ENCODE measurements at regions of chr4 and their contacts with region 1.

Region 1: DNA sequence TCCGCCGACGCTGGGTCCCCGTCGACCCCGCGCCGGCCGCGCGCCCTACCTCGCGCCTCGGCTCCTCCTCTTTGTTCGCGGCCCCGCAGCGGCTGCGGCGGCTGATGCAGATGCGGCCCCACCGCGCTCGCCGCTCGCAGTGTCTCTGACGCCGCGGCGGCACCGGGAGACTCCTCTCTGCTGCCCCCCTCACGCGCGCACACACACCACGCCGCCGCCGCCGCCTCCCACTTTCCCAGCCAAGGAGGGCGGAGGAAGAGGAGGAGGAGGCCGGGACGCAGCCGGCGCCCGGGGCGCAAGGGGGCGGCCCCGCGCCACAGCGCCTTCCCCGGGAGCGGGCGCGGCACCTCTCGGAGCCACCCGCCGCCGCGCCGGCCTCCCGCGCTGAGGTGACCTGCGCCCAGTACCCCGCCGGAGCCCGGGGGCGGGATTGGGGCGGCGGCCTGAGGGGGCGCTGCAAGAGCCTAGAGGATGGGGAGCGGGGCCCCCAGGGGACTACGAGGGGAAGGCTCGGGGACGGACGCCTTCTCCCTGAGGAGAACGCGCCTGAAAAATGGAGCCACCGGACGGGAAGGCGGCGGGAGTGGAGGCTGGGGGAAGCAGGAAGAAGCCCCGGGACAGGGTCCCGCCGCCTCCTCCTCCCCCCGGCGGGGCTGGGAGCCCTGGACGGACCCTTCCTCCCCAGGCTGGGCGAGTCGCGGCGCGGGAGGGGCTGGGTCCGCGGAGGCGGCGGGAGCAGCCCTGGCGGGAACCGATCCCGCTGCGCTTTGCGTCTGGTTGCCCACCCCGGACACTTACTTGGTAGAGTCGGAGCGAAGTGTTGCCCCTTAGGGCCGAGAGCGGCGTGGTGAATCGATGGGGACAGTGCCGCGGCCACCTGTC is at the start of gene SH3RF1:
- DNase-seq: peak; percentile 63 to 95
- H3K4me3 ChIP-seq: peak within 1 kb of the TSS; percentile 65 to 84
- H3K27ac ChIP-seq: peak within 1 kb of the TSS; percentile 95 to 98
- H3K4me1 ChIP-seq: peaks cover 0 to 30% of the 10 kb centered on the region in 2 donors
- H3K27me3 ChIP-seq: no peaks in the 10 kb centered on the region
- CTCF ChIP-seq: peak; percentile 20 to 35 (median 26)
- total RNA-seq, gene SH3RF1: 27.6 TPM

Region 2: GRCh38 chr4:168480931-168481611 is 790.0 kb before region 1 on chr4:
- intact Hi-C with region 1: loop called (anchors 10 kb)
- DNase-seq: no peak
- H3K4me3 ChIP-seq: peak overlapping the region; percentile 64 to 75
- H3K27ac ChIP-seq: peak overlapping the region; percentile 82 to 91
- H3K4me1 ChIP-seq: peaks cover 0 to 6% of the 10 kb centered on the region in 2 donors
- H3K27me3 ChIP-seq: no peaks in the 10 kb centered on the region
- CTCF ChIP-seq: no peak

Region 3: GRCh38 chr4:168859888-168860694 is 411.0 kb before region 1 on chr4:
- intact Hi-C with region 1: loop called (anchors 10 kb)
- DNase-seq: no peak
- H3K4me3 ChIP-seq: no peak overlapping the region
- H3K27ac ChIP-seq: peak overlapping the region; percentile 91 to 99
- H3K4me1 ChIP-seq: peaks cover 12 to 80% of the 10 kb centered on the region in 2 donors
- H3K27me3 ChIP-seq: no peaks in the 10 kb centered on the region
- CTCF ChIP-seq: no peak

Region 4: GRCh38 chr4:169010125-169011023 is 260.7 kb before region 1 on chr4 and contains the start of gene CBR4:
- intact Hi-C with region 1: loop called (anchors 5 kb)
- DNase-seq: peak; percentile 95 to 99
- H3K4me3 ChIP-seq: peak within 1 kb of the TSS; percentile 67 to 68
- H3K27ac ChIP-seq: peak within 1 kb of the TSS; percentile 85 to 91
- H3K4me1 ChIP-seq: peaks cover 0 to 10% of the 10 kb centered on the region in 2 donors
- H3K27me3 ChIP-seq: no peaks in the 10 kb centered on the region
- CTCF ChIP-seq: peak in 1 of 3 experiments; percentile 45
- total RNA-seq, gene CBR4: 0.53 TPM

Region 5: DNA sequence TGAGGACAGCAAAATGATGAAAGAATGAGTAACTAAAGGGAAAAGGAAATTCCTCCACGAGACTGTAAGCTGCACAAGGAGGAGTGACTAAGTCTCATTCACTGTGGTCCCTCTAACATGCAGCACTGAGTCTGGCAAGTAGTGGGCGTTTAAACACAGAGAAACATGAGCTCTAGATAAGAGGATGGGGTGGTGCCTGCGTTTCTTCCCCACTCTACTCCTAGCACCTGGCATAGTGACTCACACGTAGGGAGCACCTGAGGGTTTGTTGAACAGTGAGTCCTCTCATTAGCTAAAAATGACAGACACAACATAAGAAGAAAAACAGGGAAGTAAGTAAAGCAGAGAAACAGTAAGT is 155.2 kb before region 1 on chr4:
- intact Hi-C with region 1: loop called (anchors 1 kb)
- DNase-seq: peak in 1 of 2 donors; percentile 73
- H3K4me3 ChIP-seq: no peak overlapping the region
- H3K27ac ChIP-seq: peak overlapping the region; percentile 77 to 90
- H3K4me1 ChIP-seq: peaks cover 0 to 9% of the 10 kb centered on the region in 2 donors
- H3K27me3 ChIP-seq: no peaks in the 10 kb centered on the region
- CTCF ChIP-seq: peak in 2 of 3 experiments; percentile 29 to 30

Region 6: DNA sequence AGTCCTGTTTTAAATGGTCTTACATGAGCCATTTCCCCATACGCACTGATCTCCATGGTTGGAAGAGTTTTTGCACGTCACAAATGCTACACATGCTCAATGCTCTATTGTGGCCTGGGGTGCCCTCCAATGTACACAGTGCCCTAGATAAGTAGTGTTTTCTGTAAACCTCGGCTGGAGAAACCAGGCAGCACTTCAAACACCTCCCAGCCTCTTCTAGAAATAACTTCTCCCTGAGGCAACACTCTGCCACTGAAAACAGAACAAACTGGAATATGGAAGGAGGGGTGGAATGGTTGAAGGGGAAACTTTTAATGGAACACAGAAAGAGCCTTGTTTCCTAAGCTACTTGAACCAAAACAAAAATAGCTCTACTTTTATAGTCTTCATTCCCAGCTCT is 137.1 kb before region 1 on chr4:
- intact Hi-C with region 1: loop called (anchors 2 kb)
- DNase-seq: peak in 1 of 2 donors; percentile 68
- H3K4me3 ChIP-seq: peak overlapping the region in 1 of 2 donors; percentile 17
- H3K27ac ChIP-seq: peak overlapping the region; percentile 65 to 81
- H3K4me1 ChIP-seq: peaks cover 2 to 33% of the 10 kb centered on the region in 2 donors
- H3K27me3 ChIP-seq: no peaks in the 10 kb centered on the region
- CTCF ChIP-seq: no peak

Region 7: GRCh38 chr4:169229571-169230028 is 41.5 kb before region 1 on chr4:
- intact Hi-C with region 1: loop called (anchors 2 kb)
- DNase-seq: peak in 1 of 2 donors; percentile 72
- H3K4me3 ChIP-seq: no peak overlapping the region
- H3K27ac ChIP-seq: peak overlapping the region; percentile 27 to 71
- H3K4me1 ChIP-seq: peaks cover 0 to 33% of the 10 kb centered on the region in 2 donors
- H3K27me3 ChIP-seq: no peaks in the 10 kb centered on the region
- CTCF ChIP-seq: no peak

Measured in ascending aorta (tissue), 2 donors.